ENCODE measurements at regions of chr10 and their contacts with region 1.

Region 1: DNA sequence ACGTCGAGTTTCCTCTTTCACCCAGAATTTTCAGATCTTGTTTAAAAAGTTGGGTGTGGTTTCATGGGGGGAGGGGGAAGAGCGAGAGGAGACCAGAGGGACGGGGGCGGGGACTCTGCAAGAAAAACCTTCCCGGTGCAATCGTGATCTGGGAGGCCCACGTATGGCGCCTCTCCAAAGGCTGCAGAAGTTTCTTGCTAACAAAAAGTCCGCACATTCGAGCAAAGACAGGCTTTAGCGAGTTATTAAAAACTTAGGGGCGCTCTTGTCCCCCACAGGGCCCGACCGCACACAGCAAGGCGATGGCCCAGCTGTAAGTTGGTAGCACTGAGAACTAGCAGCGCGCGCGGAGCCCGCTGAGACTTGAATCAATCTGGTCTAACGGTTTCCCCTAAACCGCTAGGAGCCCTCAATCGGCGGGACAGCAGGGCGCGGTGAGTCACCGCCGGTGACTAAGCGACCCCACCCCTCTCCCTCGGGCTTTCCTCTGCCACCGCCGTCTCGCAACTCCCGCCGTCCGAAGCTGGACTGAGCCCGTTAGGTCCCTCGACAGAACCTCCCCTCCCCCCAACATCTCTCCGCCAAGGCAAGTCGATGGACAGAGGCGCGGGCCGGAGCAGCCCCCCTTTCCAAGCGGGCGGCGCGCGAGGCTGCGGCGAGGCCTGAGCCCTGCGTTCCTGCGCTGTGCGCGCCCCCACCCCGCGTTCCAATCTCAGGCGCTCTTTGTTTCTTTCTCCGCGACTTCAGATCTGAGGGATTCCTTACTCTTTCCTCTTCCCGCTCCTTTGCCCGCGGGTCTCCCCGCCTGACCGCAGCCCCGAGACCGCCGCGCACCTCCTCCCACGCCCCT is at the start of gene VIM:
- DNase-seq: peak; percentile 50 to 92 (median 70)
- ATAC-seq: peak; percentile 29 to 58 (median 56)
- H3K4me3 ChIP-seq: peak within 1 kb of the TSS; percentile 81 to 97
- H3K4me3 Mint-ChIP-seq: peak within 1 kb of the TSS; percentile 90 to 99 (median 95)
- H3K27ac ChIP-seq: peak within 1 kb of the TSS; percentile 97
- H3K27ac Mint-ChIP-seq: peak within 1 kb of the TSS; percentile 96 to 100
- H3K4me1 ChIP-seq: peaks cover 28 to 36% of the 10 kb centered on the region in 2 experiments
- H3K4me1 Mint-ChIP-seq: peaks cover 44 to 61% (median 54%) of the 10 kb centered on the region in 3 donors
- H3K27me3 ChIP-seq: no peaks in the 10 kb centered on the region
- H3K27me3 Mint-ChIP-seq: no peaks in the 10 kb centered on the region
- total RNA-seq, gene VIM: 704 to 1,632 (median 1,212) TPM

Region 2: GRCh38 chr10:17001961-17002749 is 226.2 kb before region 1 on chr10:
- CTCF ChIA-PET with region 1: interaction called in 1 of 2 experiments, 4 read pairs
- POLR2A ChIA-PET with region 1: interaction called, 3 to 14 read pairs
- DNase-seq: peak in 19 of 35 experiments; percentile 10 to 87 (median 29)
- ATAC-seq: peak in 2 of 4 experiments; percentile 5 to 59
- H3K4me3 ChIP-seq: no peak overlapping the region
- H3K4me3 Mint-ChIP-seq: peak overlapping the region; percentile 10 to 59 (median 14)
- H3K27ac ChIP-seq: peak overlapping the region; percentile 70
- H3K27ac Mint-ChIP-seq: peak overlapping the region; percentile 82 to 89
- H3K4me1 ChIP-seq: peaks cover 25 to 27% of the 10 kb centered on the region in 2 experiments
- H3K4me1 Mint-ChIP-seq: peaks cover 37 to 64% (median 57%) of the 10 kb centered on the region in 3 donors
- H3K27me3 ChIP-seq: no peaks in the 10 kb centered on the region
- H3K27me3 Mint-ChIP-seq: no peaks in the 10 kb centered on the region

Region 3: DNA sequence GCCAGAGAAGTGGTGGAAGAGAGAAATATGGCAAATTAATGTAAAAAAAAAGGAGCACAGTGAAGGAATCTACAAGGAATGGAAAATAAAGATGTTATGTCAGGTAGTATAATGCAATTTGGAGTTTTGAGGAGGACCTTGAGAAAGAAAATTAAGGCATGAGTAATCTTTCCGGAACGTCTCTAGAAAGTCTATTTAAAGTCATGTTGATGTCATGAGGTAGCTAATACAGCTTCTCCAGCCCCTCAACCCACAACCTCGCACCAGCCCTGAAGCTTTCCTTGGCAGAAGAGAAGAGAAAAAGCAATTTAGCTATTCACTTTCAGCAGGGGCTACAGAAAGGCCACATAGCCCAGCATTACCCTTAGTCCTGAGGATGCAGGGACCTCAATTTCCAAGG is 49.3 kb before region 1 on chr10:
- CTCF ChIA-PET with region 1: interaction called in 1 of 2 experiments, 10 read pairs
- POLR2A ChIA-PET with region 1: no interaction called
- DNase-seq: no peak
- ATAC-seq: no peak
- H3K4me3 ChIP-seq: no peak overlapping the region
- H3K4me3 Mint-ChIP-seq: no peak overlapping the region
- H3K27ac ChIP-seq: no peak overlapping the region
- H3K27ac Mint-ChIP-seq: no peak overlapping the region
- H3K4me1 ChIP-seq: peaks cover 0 to 3% of the 10 kb centered on the region in 2 experiments
- H3K4me1 Mint-ChIP-seq: peaks cover 8 to 18% (median 17%) of the 10 kb centered on the region in 3 donors
- H3K27me3 ChIP-seq: no peaks in the 10 kb centered on the region
- H3K27me3 Mint-ChIP-seq: no peaks in the 10 kb centered on the region

Region 4: DNA sequence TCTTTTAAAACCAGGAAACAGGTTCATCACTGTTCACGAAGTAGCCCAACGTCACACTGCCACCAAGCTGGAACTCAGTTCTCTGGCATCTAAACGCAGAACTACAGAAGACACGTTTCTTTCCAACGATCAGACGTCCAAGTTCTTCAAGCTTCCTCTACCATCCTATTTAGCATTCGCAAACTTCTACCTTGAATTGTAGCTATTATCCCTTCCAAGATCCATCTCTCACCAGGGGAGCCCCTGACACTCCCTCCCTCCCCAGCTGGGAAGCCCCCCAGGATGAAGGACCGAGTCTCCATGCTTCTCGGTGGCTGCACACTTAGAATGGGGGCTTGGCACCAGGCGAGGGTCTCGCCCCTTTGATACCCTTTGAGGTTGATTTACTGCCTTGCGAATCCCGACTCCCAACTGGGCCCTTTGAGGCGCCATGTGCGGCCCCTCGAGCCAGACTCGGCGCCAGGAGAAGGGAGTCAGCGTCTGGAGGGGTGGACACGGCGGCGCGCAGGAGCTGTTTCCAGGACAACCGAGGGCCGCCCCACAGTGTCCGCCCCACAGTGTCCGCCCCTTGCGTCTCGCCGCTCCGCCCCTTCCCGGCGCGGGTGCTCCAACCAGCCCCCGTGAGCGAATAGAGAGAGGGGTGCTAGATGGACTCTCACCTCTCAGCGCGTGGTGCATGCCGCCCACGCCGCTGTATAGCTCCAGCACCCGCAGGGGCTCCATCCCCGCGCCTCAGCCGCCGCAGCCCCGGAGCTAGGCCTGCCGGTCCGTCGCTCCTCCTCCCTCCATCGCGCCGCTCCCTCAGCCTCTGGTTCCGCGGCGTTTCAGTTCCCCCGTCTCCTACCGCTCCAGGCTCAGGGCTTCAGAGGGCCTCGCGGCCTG is 27.2 kb before region 1 on chr10 and contains the start of gene TRDMT1:
- CTCF ChIA-PET with region 1: interaction called, 4 to 26 read pairs
- POLR2A ChIA-PET with region 1: interaction called, 3 to 44 read pairs
- DNase-seq: peak; percentile 47 to 84 (median 66)
- ATAC-seq: peak; percentile 81 to 92 (median 90)
- H3K4me3 ChIP-seq: peak within 1 kb of the TSS; percentile 90 to 95
- H3K4me3 Mint-ChIP-seq: peak within 1 kb of the TSS; percentile 88 to 97 (median 91)
- H3K27ac ChIP-seq: peak within 1 kb of the TSS; percentile 89
- H3K27ac Mint-ChIP-seq: peak within 1 kb of the TSS; percentile 90 to 97
- H3K4me1 ChIP-seq: peaks cover 12 to 21% of the 10 kb centered on the region in 2 experiments
- H3K4me1 Mint-ChIP-seq: peaks cover 31 to 60% (median 53%) of the 10 kb centered on the region in 3 donors
- H3K27me3 ChIP-seq: no peaks in the 10 kb centered on the region
- H3K27me3 Mint-ChIP-seq: no peaks in the 10 kb centered on the region
- total RNA-seq, gene TRDMT1: 14.1 to 22.6 (median 20.5) TPM

Region 5: GRCh38 chr10:17206210-17206709 is 22.1 kb before region 1 on chr10:
- CTCF ChIA-PET with region 1: interaction called, 4 to 26 read pairs
- POLR2A ChIA-PET with region 1: interaction called, 4 to 44 read pairs
- DNase-seq: peak in 32 of 35 experiments; percentile 8 to 78 (median 44)
- ATAC-seq: peak; percentile 59 to 80 (median 70)
- H3K4me3 ChIP-seq: no peak overlapping the region
- H3K4me3 Mint-ChIP-seq: peak overlapping the region; percentile 14 to 52 (median 17)
- H3K27ac ChIP-seq: peak overlapping the region; percentile 91
- H3K27ac Mint-ChIP-seq: peak overlapping the region; percentile 88 to 92
- H3K4me1 ChIP-seq: peaks cover 18 to 24% of the 10 kb centered on the region in 2 experiments
- H3K4me1 Mint-ChIP-seq: peaks cover 15 to 51% (median 38%) of the 10 kb centered on the region in 3 donors
- H3K27me3 ChIP-seq: no peaks in the 10 kb centered on the region
- H3K27me3 Mint-ChIP-seq: no peaks in the 10 kb centered on the region

Region 6: DNA sequence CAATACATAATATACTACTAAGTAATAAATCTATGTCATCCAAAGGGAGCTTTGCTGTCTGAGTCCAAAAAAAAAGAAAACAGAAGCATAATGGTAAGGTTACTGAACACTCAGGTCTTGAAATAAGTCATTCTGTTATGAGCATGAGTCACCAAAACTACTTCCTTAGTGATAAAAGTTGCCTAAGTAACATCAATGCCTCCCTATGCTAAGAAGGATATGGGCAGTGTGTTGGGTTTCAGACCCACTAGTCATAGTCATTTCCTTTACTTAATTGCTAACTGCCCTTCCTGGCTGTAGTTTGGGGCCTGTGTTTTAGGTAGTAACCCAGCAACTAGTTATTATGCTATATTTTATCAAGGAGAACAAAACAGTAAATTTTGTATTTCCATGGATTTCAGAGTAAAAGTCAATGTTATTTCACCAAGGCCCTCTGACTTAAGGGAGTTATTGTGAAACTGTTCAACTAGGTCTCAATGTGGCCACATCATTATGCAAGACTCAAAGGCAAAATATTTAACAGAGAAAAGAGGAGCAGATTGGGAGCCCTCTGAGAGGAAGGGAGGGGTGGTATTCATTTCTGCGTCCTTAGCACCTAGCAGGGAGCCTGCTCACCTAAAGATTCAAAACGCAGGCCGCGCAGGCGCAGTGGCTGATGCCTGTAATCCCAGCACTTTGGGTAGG is 12.0 kb before region 1 on chr10:
- CTCF ChIA-PET with region 1: interaction called, 3 to 6 read pairs
- POLR2A ChIA-PET with region 1: interaction called, 4 to 11 read pairs
- DNase-seq: peak in 3 of 35 experiments; percentile 8 to 58 (median 26)
- ATAC-seq: peak; percentile 89 to 97 (median 96)
- H3K4me3 ChIP-seq: no peak overlapping the region
- H3K4me3 Mint-ChIP-seq: no peak overlapping the region
- H3K27ac ChIP-seq: peak overlapping the region; percentile 86
- H3K27ac Mint-ChIP-seq: peak overlapping the region; percentile 85 to 88
- H3K4me1 ChIP-seq: peaks cover 2 to 4% of the 10 kb centered on the region in 2 experiments
- H3K4me1 Mint-ChIP-seq: peaks cover 8 to 38% (median 30%) of the 10 kb centered on the region in 3 donors
- H3K27me3 ChIP-seq: no peaks in the 10 kb centered on the region
- H3K27me3 Mint-ChIP-seq: no peaks in the 10 kb centered on the region

Measured in T-cell (primary cell).